ENCODE measurements at regions of chr21 and their contacts with region 1.

Region 1: GRCh38 chr21:25557180-25557579 is 50.1 kb downstream of the MRPL39 start:
- DNase-seq: no peak
- ATAC-seq: no peak

Region 2: GRCh38 chr21:25428537-25428936 is 128.6 kb before region 1 on chr21:
- intact Hi-C with region 1: no loop called
- DNase-seq: no peak
- ATAC-seq: no peak

Region 3: DNA sequence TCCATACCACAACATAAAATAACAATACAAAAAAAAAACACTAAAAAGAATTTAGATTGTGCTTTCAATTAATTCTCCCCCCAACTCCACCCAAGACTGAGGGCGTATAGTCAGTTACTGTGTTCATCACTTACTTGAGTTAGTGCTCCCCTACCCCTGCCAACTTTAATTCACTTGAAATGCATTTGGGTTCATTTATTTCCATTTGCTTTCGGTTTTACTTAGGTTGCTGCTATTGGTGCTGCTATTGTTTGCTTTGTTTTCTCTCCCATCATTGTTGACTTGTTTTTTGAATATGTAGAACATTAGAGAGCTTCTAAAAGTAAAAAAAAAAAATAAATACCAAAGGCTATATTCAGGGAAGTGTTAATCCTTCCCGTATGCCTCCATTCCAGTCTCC is 1026.6 kb after region 1 on chr21:
- intact Hi-C with region 1: loop called (anchors 5 kb)
- DNase-seq: no peak
- ATAC-seq: no peak